Endothelial cell of umbilical vein (primary cell): ENCODE measurements at regions of chr14 and their contacts with region 1.

Region 1: GRCh38 chr14:100108042-100108825 is 43.0 kb downstream of the EVL start:
- DNase-seq: peak; percentile 69
- H3K4me3 ChIP-seq: no peak overlapping the region
- H3K27ac ChIP-seq: no peak overlapping the region
- H3K4me1 ChIP-seq: peaks cover 19% of the 10 kb centered on the region
- H3K27me3 ChIP-seq: no peaks in the 10 kb centered on the region
- CTCF ChIP-seq: peak; percentile 86 to 97
- POLR2A ChIP-seq: no peak

Region 2: DNA sequence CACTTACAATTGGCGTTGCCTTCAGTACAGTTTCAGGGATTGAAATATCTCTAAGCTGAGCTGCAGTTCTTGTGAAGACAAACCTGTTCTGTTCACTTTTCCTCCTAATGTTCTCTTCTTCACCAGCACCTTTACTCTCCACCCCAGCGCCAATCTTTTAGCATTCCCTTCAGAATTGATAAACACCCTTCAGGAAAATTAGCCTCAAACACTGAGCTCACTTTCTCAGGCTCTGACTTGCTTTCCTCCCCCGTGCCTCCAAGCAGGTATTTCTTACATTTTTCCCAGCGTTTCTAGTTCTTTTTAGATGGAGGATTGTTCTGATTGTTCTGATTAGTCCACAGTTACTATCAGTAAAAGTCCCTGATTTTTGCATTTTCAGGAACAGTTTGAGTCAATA is 131.6 kb before region 1 on chr14:
- CTCF ChIA-PET with region 1: interaction called, 150 read pairs
- POLR2A ChIA-PET with region 1: no interaction called
- dilution Hi-C with region 1: no loop called
- intact Hi-C with region 1: no loop called
- DNase-seq: no peak
- H3K4me3 ChIP-seq: no peak overlapping the region
- H3K27ac ChIP-seq: no peak overlapping the region
- H3K4me1 ChIP-seq: peaks cover 7% of the 10 kb centered on the region
- H3K27me3 ChIP-seq: no peaks in the 10 kb centered on the region
- CTCF ChIP-seq: no peak
- POLR2A ChIP-seq: no peak

Region 3: GRCh38 chr14:100031536-100032281 is 76.5 kb before region 1 on chr14:
- CTCF ChIA-PET with region 1: interaction called, 12 read pairs
- POLR2A ChIA-PET with region 1: no interaction called
- dilution Hi-C with region 1: no loop called
- intact Hi-C with region 1: no loop called
- DNase-seq: peak; percentile 84
- H3K4me3 ChIP-seq: peak overlapping the region in 2 of 3 experiments; percentile 28 to 48
- H3K27ac ChIP-seq: peak overlapping the region; percentile 73
- H3K4me1 ChIP-seq: peaks cover 25% of the 10 kb centered on the region
- H3K27me3 ChIP-seq: no peaks in the 10 kb centered on the region
- CTCF ChIP-seq: no peak
- POLR2A ChIP-seq: peak; percentile 35

Region 4: GRCh38 chr14:100122481-100123222 is 14.4 kb after region 1 on chr14:
- CTCF ChIA-PET with region 1: interaction called, 15 read pairs
- POLR2A ChIA-PET with region 1: no interaction called
- dilution Hi-C with region 1: no loop called
- intact Hi-C with region 1: no loop called
- DNase-seq: no peak
- H3K4me3 ChIP-seq: no peak overlapping the region
- H3K27ac ChIP-seq: no peak overlapping the region
- H3K4me1 ChIP-seq: no peaks in the 10 kb centered on the region
- H3K27me3 ChIP-seq: no peaks in the 10 kb centered on the region
- CTCF ChIP-seq: no peak
- POLR2A ChIP-seq: no peak

Region 5: GRCh38 chr14:100155042-100155846 is 47.0 kb after region 1 on chr14:
- CTCF ChIA-PET with region 1: interaction called, 14 read pairs
- POLR2A ChIA-PET with region 1: no interaction called
- dilution Hi-C with region 1: no loop called
- intact Hi-C with region 1: loop called (anchors 1 kb)
- DNase-seq: peak; percentile 20
- H3K4me3 ChIP-seq: no peak overlapping the region
- H3K27ac ChIP-seq: no peak overlapping the region
- H3K4me1 ChIP-seq: no peaks in the 10 kb centered on the region
- H3K27me3 ChIP-seq: peaks cover 7 to 12% of the 10 kb centered on the region in 2 experiments
- CTCF ChIP-seq: peak; percentile 49 to 63
- POLR2A ChIP-seq: no peak

Region 6: DNA sequence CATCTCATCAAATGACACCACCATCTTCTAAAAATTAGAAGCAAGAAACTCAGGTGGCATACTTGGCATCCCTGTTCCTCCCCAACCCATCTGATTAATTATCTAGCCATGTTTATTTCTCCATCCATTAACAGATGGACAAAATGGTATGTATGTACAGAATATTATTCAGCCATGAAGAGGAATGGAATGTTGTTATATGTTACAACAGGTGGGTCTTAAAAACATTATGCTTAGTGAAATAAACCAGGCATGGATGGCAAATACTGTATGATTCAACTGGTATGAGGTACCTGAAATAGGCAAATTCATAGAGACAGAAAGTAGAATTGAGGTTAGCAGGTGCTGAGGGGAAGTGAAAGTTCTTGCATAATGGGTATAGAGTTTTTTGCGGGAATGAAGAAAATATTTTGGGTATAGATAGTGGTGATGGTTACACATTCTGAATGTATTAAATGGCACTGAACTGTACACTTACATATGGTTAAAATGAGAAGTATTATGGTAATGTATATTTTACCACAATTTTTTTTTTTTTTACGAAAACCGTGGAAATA is 148.2 kb after region 1 on chr14:
- CTCF ChIA-PET with region 1: no interaction called
- POLR2A ChIA-PET with region 1: no interaction called
- dilution Hi-C with region 1: no loop called
- intact Hi-C with region 1: no loop called
- DNase-seq: no peak
- H3K4me3 ChIP-seq: no peak overlapping the region
- H3K27ac ChIP-seq: no peak overlapping the region
- H3K4me1 ChIP-seq: no peaks in the 10 kb centered on the region
- H3K27me3 ChIP-seq: no peaks in the 10 kb centered on the region
- CTCF ChIP-seq: no peak
- POLR2A ChIP-seq: no peak

Region 7: DNA sequence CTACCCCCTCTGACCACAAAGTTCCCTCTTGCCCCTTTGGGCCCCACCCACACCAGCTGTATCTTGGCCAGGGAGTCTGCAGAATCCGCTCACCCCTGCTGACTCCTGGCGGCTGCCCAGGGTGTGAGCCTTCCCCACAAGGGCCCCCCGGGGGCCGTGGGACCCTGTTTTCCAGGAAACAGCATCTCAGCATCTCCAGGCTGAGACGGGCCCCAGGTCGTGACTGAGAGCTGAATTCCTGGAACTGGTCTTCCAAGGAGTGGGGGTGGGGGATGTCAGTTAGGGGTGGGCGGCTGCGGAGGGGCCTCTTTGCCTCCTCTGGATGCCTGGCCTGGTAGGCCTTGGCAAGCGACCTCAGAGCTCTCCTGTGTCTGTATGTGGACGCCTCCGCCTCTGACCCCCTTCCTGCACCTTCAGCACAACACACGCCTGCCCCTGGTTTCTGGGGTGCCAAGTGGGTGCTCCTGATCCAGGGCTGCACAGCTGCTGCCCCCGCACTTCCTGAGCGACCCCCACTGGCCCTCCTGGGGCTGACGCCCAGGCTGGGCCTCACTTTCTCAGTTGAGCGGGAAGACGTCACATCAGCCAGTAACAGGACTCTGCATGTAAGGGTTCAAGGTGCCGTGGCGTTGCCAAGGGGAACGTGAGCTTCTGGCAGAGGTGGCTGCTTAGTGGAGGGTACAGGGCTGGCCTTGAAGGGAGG is 1117.4 kb after region 1 on chr14:
- CTCF ChIA-PET with region 1: no interaction called
- POLR2A ChIA-PET with region 1: no interaction called
- dilution Hi-C with region 1: no loop called
- intact Hi-C with region 1: no loop called
- DNase-seq: no peak
- H3K4me3 ChIP-seq: no peak overlapping the region
- H3K27ac ChIP-seq: no peak overlapping the region
- H3K4me1 ChIP-seq: no peaks in the 10 kb centered on the region
- H3K27me3 ChIP-seq: peaks cover 0 to 2% of the 10 kb centered on the region in 2 experiments
- CTCF ChIP-seq: no peak
- POLR2A ChIP-seq: no peak